ENCODE measurements at regions of chr16 and their contacts with region 1.

Region 1: GRCh38 chr16:67736858-67737257 is 17.7 kb upstream of the GFOD2 start:
- DNase-seq: no peak
- ATAC-seq: no peak
- H3K4me3 ChIP-seq: no peak overlapping the region
- H3K27ac ChIP-seq: no peak overlapping the region
- H3K4me1 ChIP-seq: no peaks in the 10 kb centered on the region
- H3K27me3 ChIP-seq: no peaks in the 10 kb centered on the region
- CTCF ChIP-seq: no peak

Region 2: GRCh38 chr16:67935402-67936123 is 198.7 kb after region 1 on chr16:
- CTCF ChIA-PET with region 1: no interaction called
- POLR2A ChIA-PET with region 1: interaction called, 12 read pairs
- in situ Hi-C with region 1: no loop called
- intact Hi-C with region 1: no loop called
- DNase-seq: peak; percentile 73
- ATAC-seq: peak; percentile 96
- H3K4me3 ChIP-seq: peak overlapping the region; percentile 80 to 92
- H3K27ac ChIP-seq: peak overlapping the region; percentile 93
- H3K4me1 ChIP-seq: 0 out of 2 replicates have a peak, but pooled peaks cover 4% of the 10 kb centered on the region
- H3K27me3 ChIP-seq: no peaks in the 10 kb centered on the region
- CTCF ChIP-seq: no peak

Measured in Panc1 (cell line).